Mammary epithelial cell (primary cell): ENCODE measurements at regions of chr9 and their contacts with region 1.

Region 1: DNA sequence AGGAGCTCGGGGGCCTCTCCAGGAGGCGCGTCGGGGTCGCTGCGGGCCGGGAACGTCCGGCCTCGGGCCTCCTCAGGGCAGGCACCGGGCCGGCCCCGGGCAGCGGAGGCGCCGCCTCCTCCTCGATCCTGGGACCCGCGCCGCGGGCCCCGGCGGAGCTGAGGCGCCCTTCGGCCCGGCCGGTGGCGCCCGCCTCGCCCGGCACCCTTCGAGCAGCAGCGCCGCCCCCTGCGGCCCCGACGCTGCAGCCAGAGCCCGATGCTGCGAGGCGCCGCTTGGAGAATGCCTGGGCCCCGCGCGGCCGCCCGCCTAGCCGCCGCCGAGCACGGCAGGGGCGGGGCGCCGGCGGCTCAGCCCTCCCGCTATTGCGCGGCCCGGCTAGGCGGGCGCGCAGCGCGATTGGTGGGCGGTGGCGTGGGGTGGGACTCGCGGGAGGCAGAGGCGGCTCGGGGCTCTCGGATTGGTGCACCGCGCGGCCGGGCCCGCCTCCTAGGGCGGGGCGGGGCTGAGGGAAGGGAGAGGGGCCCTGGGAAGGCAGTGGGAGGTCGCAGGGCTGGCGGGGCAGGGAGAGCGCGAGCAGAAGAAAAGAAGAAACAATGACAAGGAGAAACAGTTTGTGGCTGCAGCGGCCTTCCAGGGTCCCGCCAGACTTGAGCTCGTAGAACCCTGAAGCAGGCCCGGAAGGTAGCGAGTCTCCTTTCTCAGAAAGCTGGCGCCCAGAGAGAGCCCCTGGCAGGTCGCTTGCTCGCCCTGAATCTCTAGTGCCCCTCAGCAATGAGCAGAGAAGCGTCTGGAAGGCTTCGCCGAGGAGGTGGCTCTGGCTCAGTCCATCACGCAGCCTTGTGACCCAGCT is at the start of gene EEIG1:
- DNase-seq: peak; percentile 88
- H3K4me3 ChIP-seq: peak within 1 kb of the TSS; percentile 64 to 84 (median 78)
- H3K27ac ChIP-seq: peak within 1 kb of the TSS; percentile 46
- H3K4me1 ChIP-seq: peaks cover 35% of the 10 kb centered on the region
- H3K27me3 ChIP-seq: no peaks in the 10 kb centered on the region
- CTCF ChIP-seq: no peak
- total RNA-seq, gene EEIG1: 23.0 to 29.3 TPM

Region 2: DNA sequence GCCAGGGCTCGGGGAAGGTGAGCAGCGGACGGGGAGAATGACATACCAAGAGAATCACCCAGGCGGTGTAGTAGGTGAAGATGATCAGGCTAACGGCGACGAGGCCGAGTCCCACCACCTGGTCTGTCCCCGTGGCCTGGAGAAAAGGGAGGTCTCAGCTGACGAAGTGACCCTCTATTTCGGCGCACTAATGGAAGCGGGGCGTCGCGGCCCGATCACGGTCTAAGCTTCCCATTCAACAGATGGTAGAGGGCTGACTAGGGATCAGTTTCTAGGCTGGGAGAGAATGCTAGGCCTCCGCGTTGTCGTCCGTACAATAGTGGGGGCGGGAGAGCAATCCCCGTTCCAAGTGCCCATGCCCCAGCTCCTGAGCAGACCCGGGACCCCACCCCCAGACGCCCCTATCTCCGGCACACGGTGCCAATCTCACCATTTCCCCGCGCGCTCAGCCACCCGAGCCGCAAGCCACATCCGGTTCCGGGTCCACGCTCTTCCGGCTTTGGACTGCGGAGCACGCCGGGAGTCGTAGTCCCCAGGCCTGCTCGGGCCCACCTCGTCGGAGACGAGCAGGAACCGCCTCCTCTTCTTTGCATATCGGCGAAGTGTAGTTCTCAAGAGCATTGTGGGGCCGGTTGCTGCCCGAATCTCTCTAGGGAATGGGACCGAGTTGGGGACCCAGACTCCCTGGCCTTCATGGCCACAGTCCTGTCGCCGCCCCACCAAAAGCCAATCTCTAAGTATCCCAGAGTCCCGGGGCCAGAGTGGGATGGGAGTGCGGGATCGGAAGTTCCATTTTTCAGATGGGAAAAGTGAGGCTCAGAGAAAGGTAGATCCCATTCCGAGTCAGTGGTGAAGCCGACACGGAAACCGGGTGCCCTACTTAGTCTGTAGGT is 43.3 kb before region 1 on chr9 and contains the start of gene DPM2:
- CTCF ChIA-PET with region 1: interaction called, 3 read pairs
- dilution Hi-C with region 1: loop called (anchors 5 kb)
- in situ Hi-C with region 1: no loop called
- intact Hi-C with region 1: no loop called
- DNase-seq: peak; percentile 78
- H3K4me3 ChIP-seq: peak within 1 kb of the TSS; percentile 60 to 89 (median 73)
- H3K27ac ChIP-seq: peak within 1 kb of the TSS; percentile 60
- H3K4me1 ChIP-seq: peaks cover 23% of the 10 kb centered on the region
- H3K27me3 ChIP-seq: no peaks in the 10 kb centered on the region
- CTCF ChIP-seq: no peak
- total RNA-seq, gene DPM2: 10.0 to 48.7 TPM

Region 3: GRCh38 chr9:127943731-127944144 is 37.2 kb before region 1 on chr9:
- CTCF ChIA-PET with region 1: interaction called, 3 read pairs
- dilution Hi-C with region 1: loop called (anchors 5 kb)
- in situ Hi-C with region 1: no loop called
- intact Hi-C with region 1: loop called (anchors 1 kb)
- DNase-seq: peak; percentile 50
- H3K4me3 ChIP-seq: no peak overlapping the region
- H3K27ac ChIP-seq: no peak overlapping the region
- H3K4me1 ChIP-seq: peaks cover 3% of the 10 kb centered on the region
- H3K27me3 ChIP-seq: no peaks in the 10 kb centered on the region
- CTCF ChIP-seq: peak; percentile 81 to 94

Region 4: GRCh38 chr9:127968717-127969383 is 12.1 kb before region 1 on chr9:
- CTCF ChIA-PET with region 1: no interaction called
- dilution Hi-C with region 1: no loop called
- in situ Hi-C with region 1: no loop called
- intact Hi-C with region 1: loop called (anchors 1 kb)
- DNase-seq: peak; percentile 75
- H3K4me3 ChIP-seq: no peak overlapping the region
- H3K27ac ChIP-seq: peak overlapping the region; percentile 64
- H3K4me1 ChIP-seq: peaks cover 71% of the 10 kb centered on the region
- H3K27me3 ChIP-seq: no peaks in the 10 kb centered on the region
- CTCF ChIP-seq: no peak

Region 5: GRCh38 chr9:128043467-128043868 is 62.5 kb after region 1 on chr9:
- CTCF ChIA-PET with region 1: no interaction called
- dilution Hi-C with region 1: loop called (anchors 10 kb)
- in situ Hi-C with region 1: no loop called
- intact Hi-C with region 1: no loop called
- DNase-seq: no peak
- H3K4me3 ChIP-seq: no peak overlapping the region
- H3K27ac ChIP-seq: no peak overlapping the region
- H3K4me1 ChIP-seq: no peaks in the 10 kb centered on the region
- H3K27me3 ChIP-seq: no peaks in the 10 kb centered on the region
- CTCF ChIP-seq: no peak

Region 6: DNA sequence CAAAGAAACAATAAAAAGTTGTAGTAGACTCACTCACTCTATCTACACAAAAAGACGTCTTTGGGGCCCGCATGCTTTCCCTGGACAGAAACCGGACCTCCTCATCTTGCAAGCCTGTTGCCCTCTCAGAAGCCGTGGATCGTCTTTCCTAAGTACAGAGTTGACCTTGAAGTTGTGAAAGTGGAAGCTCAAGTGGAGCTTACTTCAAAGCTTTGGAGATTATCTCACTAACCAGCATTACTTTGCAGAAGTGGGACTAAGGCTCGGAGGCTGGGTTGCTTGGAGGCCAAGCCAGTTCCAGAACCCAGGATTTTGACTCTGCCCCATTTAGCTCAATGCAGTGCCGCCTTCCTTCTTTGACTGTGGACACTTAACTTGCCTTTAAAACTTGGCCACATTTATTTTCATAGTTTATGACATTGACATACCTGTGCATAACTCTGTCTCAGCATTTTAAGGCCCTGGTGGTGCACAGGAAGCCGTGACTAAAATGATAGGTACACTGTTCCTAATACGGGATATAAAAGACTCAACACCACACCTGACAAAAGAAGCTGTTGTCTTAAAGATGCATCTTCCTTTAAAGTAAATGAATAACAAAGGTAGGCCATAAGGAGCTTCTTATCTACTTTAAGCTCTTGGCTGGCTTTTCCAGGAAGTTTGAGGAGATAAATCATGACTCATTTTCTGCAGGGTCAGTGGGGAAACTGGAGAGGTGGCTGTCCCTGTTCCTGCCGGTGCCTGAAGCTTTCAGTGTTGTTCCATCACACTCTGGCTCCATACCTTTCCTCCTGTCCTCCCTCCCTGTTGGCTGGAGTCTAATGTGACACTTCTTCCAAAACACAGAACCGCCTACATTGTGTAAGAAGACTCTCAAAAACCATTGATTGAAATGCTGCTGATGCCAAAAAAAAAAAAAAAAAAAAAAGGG is 97.8 kb after region 1 on chr9:
- CTCF ChIA-PET with region 1: no interaction called
- dilution Hi-C with region 1: loop called (anchors 5 kb)
- in situ Hi-C with region 1: no loop called
- intact Hi-C with region 1: no loop called
- DNase-seq: peak; percentile 50
- H3K4me3 ChIP-seq: no peak overlapping the region
- H3K27ac ChIP-seq: no peak overlapping the region
- H3K4me1 ChIP-seq: peaks cover 14% of the 10 kb centered on the region
- H3K27me3 ChIP-seq: no peaks in the 10 kb centered on the region
- CTCF ChIP-seq: no peak